Heart right ventricle (tissue), 16 donors: ENCODE measurements at regions of chr12 and their contacts with region 1.

Region 1: DNA sequence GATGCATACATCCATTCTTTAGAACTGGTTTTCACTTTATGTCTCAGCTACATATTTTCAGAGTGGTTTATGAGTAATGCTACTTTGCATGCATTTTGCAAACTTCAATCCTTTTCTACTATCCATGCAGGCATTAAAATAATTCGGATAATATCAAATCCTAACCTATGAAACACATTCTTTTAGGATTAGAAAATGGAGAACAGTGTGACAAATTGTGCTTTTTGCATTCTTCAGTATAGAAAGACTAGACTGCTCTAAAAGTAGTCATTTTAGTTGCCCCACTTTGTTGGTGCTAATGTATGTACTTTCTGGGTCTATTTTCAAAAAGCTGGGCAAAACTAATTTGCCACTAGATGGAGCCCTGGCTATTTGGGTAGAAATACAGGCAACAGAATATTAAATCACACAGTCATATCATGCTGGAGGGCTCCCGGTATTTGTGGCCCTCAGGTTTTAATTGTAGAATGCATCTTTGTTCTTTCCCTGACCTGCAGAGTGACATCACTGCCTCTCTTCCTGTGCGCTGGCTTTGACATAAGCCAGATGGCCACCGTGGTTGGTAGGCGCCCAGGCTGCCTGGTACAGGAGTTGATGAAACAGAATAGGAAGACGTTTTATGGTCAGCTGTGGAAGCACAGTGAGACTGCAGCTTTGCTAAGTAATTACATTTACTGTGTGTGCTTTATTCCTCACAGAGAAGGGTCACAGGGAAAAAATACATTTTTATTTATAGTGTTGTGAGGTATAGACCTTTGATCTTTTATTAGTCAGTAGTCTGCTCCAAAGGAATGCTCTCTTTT is 28.1 kb downstream of the MSRB3 start:
- DNase-seq: peak; percentile 54 to 67
- ATAC-seq: peak; percentile 77 to 95 (median 92)
- H3K4me3 ChIP-seq: no peak overlapping the region
- H3K27ac ChIP-seq: peak overlapping the region in 7 of 10 donors; percentile 3 to 58 (median 34)
- H3K4me1 ChIP-seq: peaks cover 0 to 64% (median 46%) of the 10 kb centered on the region in 9 donors
- H3K27me3 ChIP-seq: no peaks in the 10 kb centered on the region
- CTCF ChIP-seq: peak in 8 of 9 donors; percentile 11 to 59 (median 49)

Region 2: GRCh38 chr12:65327207-65328076 is 20.9 kb after region 1 on chr12:
- intact Hi-C with region 1: loop called in 1 of 10 experiments (anchors 1 kb)
- DNase-seq: peak in 1 of 2 donors; percentile 10
- ATAC-seq: peak in 7 of 8 donors; percentile 47 to 81 (median 59)
- H3K4me3 ChIP-seq: no peak overlapping the region
- H3K27ac ChIP-seq: peak overlapping the region in 5 of 10 donors; percentile 13 to 62 (median 32)
- H3K4me1 ChIP-seq: peaks cover 0 to 44% (median 20%) of the 10 kb centered on the region in 9 donors
- H3K27me3 ChIP-seq: no peaks in the 10 kb centered on the region
- CTCF ChIP-seq: no peak